ENCODE measurements at regions of chr2 and their contacts with region 1.

Region 1: DNA sequence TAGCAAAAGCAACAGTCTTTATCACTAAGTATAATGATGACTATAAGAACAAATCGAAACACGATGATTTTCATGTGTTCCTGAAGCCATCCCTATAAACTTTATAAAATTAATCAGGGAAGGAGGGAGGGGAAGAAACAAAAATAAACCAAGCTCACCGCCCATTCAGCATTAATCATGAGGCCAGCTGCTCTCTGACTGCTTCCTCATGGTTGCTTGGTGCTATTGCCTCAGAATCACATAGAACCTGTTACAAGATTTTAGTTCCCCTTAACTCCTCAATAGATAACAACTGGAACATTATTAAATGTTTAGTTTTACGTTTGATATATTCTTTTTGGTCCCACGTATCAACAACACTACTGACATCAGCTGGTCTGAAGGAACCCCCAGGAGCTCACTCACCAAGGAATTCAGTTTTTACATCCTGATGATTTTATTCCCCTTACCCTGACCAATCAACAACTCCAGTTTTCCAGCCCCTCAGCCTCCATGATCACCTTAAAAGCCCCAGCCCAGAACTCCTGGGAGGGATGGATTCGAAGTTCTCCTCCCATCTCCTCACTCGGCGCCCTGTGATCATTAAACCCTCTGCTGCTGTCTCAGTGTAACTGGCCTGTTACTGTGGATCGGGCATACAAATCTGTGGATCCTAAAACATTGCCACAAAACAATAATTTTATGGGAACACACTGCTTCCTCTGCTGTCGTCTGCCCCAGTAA is 10.6 kb upstream of the HNRNPLL start:
- DNase-seq: no peak
- ATAC-seq: peak; percentile 70
- H3K4me3 ChIP-seq: no peak overlapping the region
- H3K4me3 Mint-ChIP-seq: no peak overlapping the region
- H3K27ac ChIP-seq: no peak overlapping the region
- H3K27ac Mint-ChIP-seq: peak overlapping the region in 2 of 9 donors; percentile 9 to 39
- H3K4me1 ChIP-seq: no peaks in the 10 kb centered on the region
- H3K4me1 Mint-ChIP-seq: peaks cover 6 to 49% (median 8%) of the 10 kb centered on the region in 7 donors
- H3K27me3 ChIP-seq: no peaks in the 10 kb centered on the region
- H3K27me3 Mint-ChIP-seq: peaks cover 0 to 5% (median 0%) of the 10 kb centered on the region in 5 donors

Region 2: DNA sequence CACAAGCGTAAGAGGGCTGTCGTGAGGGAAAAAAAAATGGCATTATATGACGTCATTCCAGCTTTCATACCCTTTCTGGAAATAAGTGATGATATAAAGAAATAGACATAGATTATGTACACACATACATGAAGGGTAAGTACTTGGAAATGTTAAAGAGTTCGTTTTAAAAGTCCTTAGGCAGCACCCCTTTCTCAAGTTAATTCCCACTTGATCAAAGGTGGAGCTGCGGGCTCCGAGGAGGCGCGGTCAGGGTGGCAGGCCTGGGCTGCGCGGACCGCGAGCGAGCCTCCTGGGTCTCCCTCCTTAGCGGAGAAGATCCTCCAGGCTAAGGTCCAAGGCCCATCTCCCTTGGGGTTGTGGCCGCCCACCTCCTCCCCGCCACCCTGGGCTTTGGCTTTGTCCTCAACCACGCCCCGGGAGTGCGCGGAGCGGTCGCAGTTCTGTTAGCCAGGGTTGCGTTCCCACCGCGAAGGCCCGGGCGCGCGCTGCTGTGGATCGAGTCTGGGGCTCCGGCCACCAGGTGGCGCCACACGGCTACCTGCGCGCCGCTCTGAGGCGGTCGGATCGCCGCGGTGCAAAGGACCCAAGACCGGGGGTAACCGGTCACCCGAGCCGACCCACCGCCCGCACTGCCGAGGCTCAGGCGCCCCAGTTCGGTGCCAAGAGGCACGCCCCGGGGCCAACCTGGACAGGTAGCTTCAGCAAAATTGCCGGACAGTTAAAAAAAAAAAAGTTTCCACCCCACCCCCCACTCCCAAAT is 77.4 kb before region 1 on chr2:
- CTCF ChIA-PET with region 1: no interaction called
- POLR2A ChIA-PET with region 1: no interaction called
- intact Hi-C with region 1: no loop called
- DNase-seq: peak; percentile 48 to 88 (median 72)
- ATAC-seq: peak; percentile 95
- H3K4me3 ChIP-seq: peak overlapping the region; percentile 40
- H3K4me3 Mint-ChIP-seq: peak overlapping the region; percentile 36 to 72 (median 56)
- H3K27ac ChIP-seq: no peak overlapping the region
- H3K27ac Mint-ChIP-seq: peak overlapping the region in 1 of 9 donors; percentile 59
- H3K4me1 ChIP-seq: peaks cover 0 to 5% of the 10 kb centered on the region in 2 donors
- H3K4me1 Mint-ChIP-seq: peaks cover 0 to 6% (median 3%) of the 10 kb centered on the region in 7 donors
- H3K27me3 ChIP-seq: peaks cover 0 to 4% of the 10 kb centered on the region in 2 donors
- H3K27me3 Mint-ChIP-seq: peaks cover 4 to 37% (median 8%) of the 10 kb centered on the region in 5 donors

Region 3: DNA sequence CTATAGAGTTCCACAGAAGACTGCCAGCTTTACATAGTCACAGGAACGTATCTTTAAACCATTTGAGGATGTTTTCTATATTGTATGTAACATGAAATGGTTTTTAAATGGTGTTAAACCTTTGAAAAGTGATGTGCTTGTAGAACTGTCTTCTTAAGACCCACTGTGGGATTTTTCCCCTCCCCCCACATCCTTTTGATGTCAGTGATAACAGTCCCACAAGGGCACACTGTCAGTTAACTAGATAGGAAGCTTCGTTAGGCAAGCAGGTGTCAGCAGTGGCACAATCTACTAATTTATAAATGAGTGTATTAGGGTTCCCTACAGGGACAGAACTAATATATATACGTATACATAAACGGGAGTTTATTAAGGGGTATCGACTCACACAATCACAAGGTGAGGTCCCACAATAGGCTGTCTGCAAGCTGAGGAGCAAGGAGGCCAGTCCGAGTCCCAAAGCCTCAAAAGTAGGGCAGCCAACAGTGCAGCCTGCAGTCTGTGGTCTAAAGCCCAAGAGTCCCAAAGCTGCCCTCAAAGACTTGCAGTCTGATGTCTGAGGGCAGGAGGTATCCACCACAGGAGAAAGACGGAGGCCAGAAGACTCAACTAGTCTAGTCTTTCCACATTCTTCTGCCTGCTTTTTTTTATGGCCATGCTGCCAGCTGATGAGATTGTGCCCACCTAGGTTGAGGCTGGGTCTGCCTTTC is 13.2 kb after region 1 on chr2:
- CTCF ChIA-PET with region 1: interaction called, 3 read pairs
- POLR2A ChIA-PET with region 1: interaction called, 3 read pairs
- intact Hi-C with region 1: loop called in 1 of 2 experiments (anchors 2 kb)
- DNase-seq: peak in 7 of 9 donors; percentile 19 to 54 (median 37)
- ATAC-seq: peak; percentile 45
- H3K4me3 ChIP-seq: no peak overlapping the region
- H3K4me3 Mint-ChIP-seq: peak overlapping the region in 4 of 10 donors; percentile 14 to 60 (median 23)
- H3K27ac ChIP-seq: no peak overlapping the region
- H3K27ac Mint-ChIP-seq: peak overlapping the region in 2 of 9 donors; percentile 35 to 36
- H3K4me1 ChIP-seq: peaks cover 0 to 15% of the 10 kb centered on the region in 2 donors
- H3K4me1 Mint-ChIP-seq: peaks cover 7 to 32% (median 13%) of the 10 kb centered on the region in 7 donors
- H3K27me3 ChIP-seq: no peaks in the 10 kb centered on the region
- H3K27me3 Mint-ChIP-seq: no peaks in the 10 kb centered on the region

Region 4: GRCh38 chr2:39679805-39680204 is 1066.5 kb after region 1 on chr2:
- CTCF ChIA-PET with region 1: no interaction called
- POLR2A ChIA-PET with region 1: no interaction called
- intact Hi-C with region 1: no loop called
- DNase-seq: no peak
- ATAC-seq: no peak
- H3K4me3 ChIP-seq: no peak overlapping the region
- H3K4me3 Mint-ChIP-seq: no peak overlapping the region
- H3K27ac ChIP-seq: no peak overlapping the region
- H3K27ac Mint-ChIP-seq: no peak overlapping the region
- H3K4me1 ChIP-seq: no peaks in the 10 kb centered on the region
- H3K4me1 Mint-ChIP-seq: no peaks in the 10 kb centered on the region
- H3K27me3 ChIP-seq: no peaks in the 10 kb centered on the region
- H3K27me3 Mint-ChIP-seq: peaks cover 24 to 41% (median 39%) of the 10 kb centered on the region in 5 donors